Motor neuron (in vitro differentiated cells): ENCODE measurements at regions of chr17 and their contacts with region 1.

Region 1: GRCh38 chr17:68539548-68540467 is 27.6 kb downstream of the PRKAR1A start:
- ATAC-seq: peak in 7 of 8 experiments; percentile 10 to 74 (median 55)
- H3K4me3 ChIP-seq: no peak overlapping the region
- H3K27ac ChIP-seq: no peak overlapping the region
- H3K4me1 ChIP-seq: peaks cover 0 to 2% of the 10 kb centered on the region in 2 donors

Region 2: GRCh38 chr17:68377862-68378770 is 161.7 kb before region 1 on chr17:
- in situ Hi-C with region 1: no loop called
- ATAC-seq: peak; percentile 62 to 98 (median 96)
- H3K4me3 ChIP-seq: no peak overlapping the region
- H3K27ac ChIP-seq: peak overlapping the region in 1 of 2 donors; percentile 25
- H3K4me1 ChIP-seq: peaks cover 13 to 25% of the 10 kb centered on the region in 2 donors

Region 3: GRCh38 chr17:68431661-68432071 is 108.1 kb before region 1 on chr17:
- in situ Hi-C with region 1: no loop called
- ATAC-seq: peak in 3 of 8 experiments; percentile 19 to 46 (median 27)
- H3K4me3 ChIP-seq: no peak overlapping the region
- H3K27ac ChIP-seq: no peak overlapping the region
- H3K4me1 ChIP-seq: no peaks in the 10 kb centered on the region

Region 4: GRCh38 chr17:68733241-68734176 is 193.7 kb after region 1 on chr17:
- in situ Hi-C with region 1: loop called in 1 of 9 experiments (anchors 25 kb)
- ATAC-seq: peak in 3 of 8 experiments; percentile 60 to 89 (median 63)
- H3K4me3 ChIP-seq: no peak overlapping the region
- H3K27ac ChIP-seq: no peak overlapping the region
- H3K4me1 ChIP-seq: no peaks in the 10 kb centered on the region

Region 5: DNA sequence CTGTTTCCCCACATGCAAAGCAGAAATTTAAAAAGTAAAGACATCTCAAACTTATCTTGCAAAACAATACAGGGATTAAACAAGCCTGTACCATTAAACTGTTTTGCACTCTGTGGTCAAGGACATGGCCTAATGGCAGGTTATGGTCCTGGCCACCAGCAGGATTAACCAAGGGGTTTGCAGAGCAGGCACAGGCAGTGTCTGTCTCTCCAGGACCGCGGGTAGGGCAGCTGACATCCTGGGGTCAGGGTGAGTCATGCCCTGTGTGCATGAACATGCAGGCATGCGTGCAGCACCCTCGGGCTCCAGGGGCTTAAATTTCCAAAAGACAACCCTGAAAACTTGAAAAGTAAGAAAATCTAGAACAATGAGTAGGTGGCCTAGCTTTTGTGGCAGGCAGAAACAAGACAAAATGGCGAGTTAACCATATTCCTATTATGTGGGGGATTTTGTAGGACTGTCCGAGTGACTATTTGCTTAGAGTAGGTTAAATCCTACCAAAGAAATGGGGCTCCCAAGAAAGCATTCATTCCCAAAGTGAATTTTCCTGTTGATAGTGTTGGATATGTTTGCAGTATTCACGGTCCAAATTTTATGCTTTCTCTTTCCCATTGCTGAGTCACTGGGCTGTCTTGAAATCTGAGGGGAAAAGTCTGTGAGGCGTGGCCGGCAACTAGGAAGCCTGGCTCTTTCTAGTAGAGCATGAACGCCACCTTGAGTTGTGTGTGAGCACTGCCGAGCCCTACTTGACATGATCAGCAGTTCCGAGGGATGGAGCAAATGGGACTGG is 219.7 kb after region 1 on chr17:
- in situ Hi-C with region 1: loop called in 3 of 9 experiments (anchors 10 to 25 kb)
- ATAC-seq: peak; percentile 93 to 99 (median 96)
- H3K4me3 ChIP-seq: peak overlapping the region in 3 of 5 donors; percentile 9 to 22 (median 18)
- H3K27ac ChIP-seq: peak overlapping the region; percentile 14 to 50
- H3K4me1 ChIP-seq: peaks cover 6 to 8% of the 10 kb centered on the region in 2 donors